ENCODE measurements at regions of chr18 and their contacts with region 1.

Region 1: DNA sequence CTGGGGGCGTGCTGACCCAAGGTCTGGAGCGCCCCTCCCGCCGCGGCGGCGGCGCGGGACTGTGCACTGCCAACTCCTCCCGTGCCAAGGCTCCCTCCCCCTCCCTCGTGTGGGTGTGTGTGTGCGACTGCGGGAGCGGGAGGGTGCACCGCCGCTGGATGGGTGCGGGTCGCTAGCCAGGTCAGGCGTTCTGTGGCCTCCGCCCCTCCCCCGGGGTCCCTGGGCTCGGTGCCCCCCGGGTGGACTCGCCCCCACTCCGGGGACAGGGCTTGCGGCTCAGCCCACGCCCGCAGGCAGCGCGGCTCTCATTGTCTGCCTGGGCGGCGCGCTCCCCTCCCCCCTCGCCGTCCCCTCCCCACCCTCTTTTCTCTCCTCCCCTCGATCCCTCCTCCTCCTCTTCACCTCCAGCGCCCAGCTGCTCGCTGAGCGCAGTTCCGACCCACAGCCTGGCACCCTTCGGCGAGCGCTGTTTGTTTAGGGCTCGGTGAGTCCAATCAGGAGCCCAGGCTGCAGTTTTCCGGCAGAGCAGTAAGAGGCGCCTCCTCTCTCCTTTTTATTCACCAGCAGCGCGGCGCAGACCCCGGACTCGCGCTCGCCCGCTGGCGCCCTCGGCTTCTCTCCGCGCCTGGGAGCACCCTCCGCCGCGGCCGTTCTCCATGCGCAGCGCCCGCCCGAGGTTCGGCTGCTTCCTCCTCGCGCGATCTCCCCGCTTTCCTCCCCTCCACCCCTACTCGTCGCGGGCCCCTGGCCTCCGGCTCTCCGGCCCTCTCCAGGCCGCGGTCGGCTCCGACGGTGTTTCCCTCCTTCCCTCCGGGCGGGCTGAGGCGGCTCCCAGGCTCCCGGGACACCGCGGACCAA is at the start of gene GATA6:
- DNase-seq: peak; percentile 63
- ATAC-seq: peak; percentile 71
- H3K4me3 Mint-ChIP-seq: peak within 1 kb of the TSS; percentile 61
- H3K27ac Mint-ChIP-seq: no peak within 1 kb of the TSS
- H3K4me1 Mint-ChIP-seq: peaks cover 21% of the 10 kb centered on the region
- H3K27me3 Mint-ChIP-seq: peaks cover 65% of the 10 kb centered on the region
- total RNA-seq, gene GATA6: not detected

Region 2: GRCh38 chr18:21242141-21242779 is 927.0 kb before region 1 on chr18 and contains the start of gene GREB1L:
- CTCF ChIA-PET with region 1: no interaction called
- POLR2A ChIA-PET with region 1: no interaction called
- intact Hi-C with region 1: loop called in 1 of 2 experiments (anchors 5 kb)
- DNase-seq: peak; percentile 62
- ATAC-seq: peak; percentile 86
- H3K4me3 Mint-ChIP-seq: peak within 1 kb of the TSS; percentile 33
- H3K27ac Mint-ChIP-seq: no peak within 1 kb of the TSS
- H3K4me1 Mint-ChIP-seq: peaks cover 5% of the 10 kb centered on the region
- H3K27me3 Mint-ChIP-seq: peaks cover 52% of the 10 kb centered on the region
- total RNA-seq, gene GREB1L: not detected

Region 3: GRCh38 chr18:21997207-21998143 is 171.8 kb before region 1 on chr18:
- CTCF ChIA-PET with region 1: no interaction called
- POLR2A ChIA-PET with region 1: no interaction called
- intact Hi-C with region 1: loop called in 1 of 2 experiments (anchors 10 kb)
- DNase-seq: no peak
- ATAC-seq: peak; percentile 47
- H3K4me3 Mint-ChIP-seq: no peak overlapping the region
- H3K27ac Mint-ChIP-seq: no peak overlapping the region
- H3K4me1 Mint-ChIP-seq: peaks cover 3% of the 10 kb centered on the region
- H3K27me3 Mint-ChIP-seq: no peaks in the 10 kb centered on the region

Region 4: DNA sequence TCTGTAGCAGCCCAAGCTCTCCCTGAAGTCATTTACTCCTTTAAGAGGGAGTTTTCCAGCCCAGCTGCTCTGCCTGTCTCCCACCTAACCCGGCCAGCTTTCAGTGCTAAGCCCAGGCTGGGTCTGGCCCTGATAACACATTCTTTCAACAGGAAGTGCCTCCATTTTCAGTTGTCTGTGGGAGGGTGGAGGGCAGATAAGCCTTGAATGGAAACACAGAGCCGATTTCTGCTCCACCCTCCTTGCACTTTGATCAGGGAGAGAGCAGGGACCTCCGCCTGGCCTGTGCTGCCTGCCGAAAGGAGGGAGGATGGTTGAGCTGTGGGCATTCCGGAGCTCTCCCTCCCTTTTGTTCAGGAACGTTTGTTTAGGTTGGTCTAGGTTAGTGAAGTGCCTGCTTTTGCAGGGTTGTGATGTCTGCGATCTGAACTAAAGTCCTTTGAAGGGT is 24.9 kb after region 1 on chr18:
- CTCF ChIA-PET with region 1: no interaction called
- POLR2A ChIA-PET with region 1: no interaction called
- intact Hi-C with region 1: no loop called
- DNase-seq: no peak
- ATAC-seq: no peak
- H3K4me3 Mint-ChIP-seq: no peak overlapping the region
- H3K27ac Mint-ChIP-seq: no peak overlapping the region
- H3K4me1 Mint-ChIP-seq: no peaks in the 10 kb centered on the region
- H3K27me3 Mint-ChIP-seq: peaks cover 14% of the 10 kb centered on the region

Region 5: GRCh38 chr18:22230471-22230945 is 61.3 kb after region 1 on chr18:
- CTCF ChIA-PET with region 1: no interaction called
- POLR2A ChIA-PET with region 1: no interaction called
- intact Hi-C with region 1: no loop called
- DNase-seq: no peak
- ATAC-seq: no peak
- H3K4me3 Mint-ChIP-seq: no peak overlapping the region
- H3K27ac Mint-ChIP-seq: no peak overlapping the region
- H3K4me1 Mint-ChIP-seq: no peaks in the 10 kb centered on the region
- H3K27me3 Mint-ChIP-seq: peaks cover 4% of the 10 kb centered on the region

Region 6: DNA sequence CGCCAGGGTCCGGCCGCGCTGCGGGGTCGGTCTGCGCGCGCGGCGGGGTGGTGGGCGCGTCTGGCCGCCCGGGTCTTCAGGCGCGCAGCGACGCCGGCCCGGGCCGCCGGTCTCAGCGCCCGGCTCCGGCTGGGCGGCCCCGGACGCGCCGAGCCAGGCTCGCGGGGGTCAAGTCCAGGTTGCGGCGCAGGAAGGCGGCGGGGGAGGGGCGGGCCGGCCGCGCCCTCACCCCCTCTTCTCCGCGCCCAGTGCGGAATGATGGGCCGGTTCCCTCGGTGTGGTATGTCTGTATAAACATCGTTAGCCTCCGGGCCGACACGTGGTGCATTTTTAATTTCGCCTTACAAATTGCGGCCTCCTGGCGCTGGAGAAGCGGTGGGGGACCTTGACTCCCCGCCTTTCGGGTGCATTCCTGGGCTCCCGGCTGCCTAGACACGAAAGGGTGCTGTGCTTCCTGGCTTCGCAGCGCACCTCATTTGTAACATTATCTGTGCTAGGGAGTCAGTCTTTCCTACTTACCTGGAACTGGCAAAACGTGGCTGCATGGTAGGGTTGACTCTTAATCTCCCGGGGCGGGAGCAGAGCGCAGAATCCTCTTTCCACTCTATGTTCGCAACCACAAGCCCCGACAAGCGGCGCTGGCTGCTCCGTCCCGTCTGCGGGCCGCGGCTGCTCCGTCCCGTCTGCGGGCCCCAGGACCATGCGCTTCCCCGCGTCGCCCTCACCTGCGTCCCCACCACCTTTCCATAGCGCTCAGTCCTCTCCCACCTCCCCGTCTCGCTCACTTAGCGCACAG is 179.5 kb after region 1 on chr18:
- CTCF ChIA-PET with region 1: no interaction called
- POLR2A ChIA-PET with region 1: no interaction called
- intact Hi-C with region 1: loop called (anchors 2 to 10 kb)
- DNase-seq: peak; percentile 9
- ATAC-seq: peak; percentile 19
- H3K4me3 Mint-ChIP-seq: peak overlapping the region; percentile 49
- H3K27ac Mint-ChIP-seq: no peak overlapping the region
- H3K4me1 Mint-ChIP-seq: peaks cover 6% of the 10 kb centered on the region
- H3K27me3 Mint-ChIP-seq: peaks cover 38% of the 10 kb centered on the region

Region 7: DNA sequence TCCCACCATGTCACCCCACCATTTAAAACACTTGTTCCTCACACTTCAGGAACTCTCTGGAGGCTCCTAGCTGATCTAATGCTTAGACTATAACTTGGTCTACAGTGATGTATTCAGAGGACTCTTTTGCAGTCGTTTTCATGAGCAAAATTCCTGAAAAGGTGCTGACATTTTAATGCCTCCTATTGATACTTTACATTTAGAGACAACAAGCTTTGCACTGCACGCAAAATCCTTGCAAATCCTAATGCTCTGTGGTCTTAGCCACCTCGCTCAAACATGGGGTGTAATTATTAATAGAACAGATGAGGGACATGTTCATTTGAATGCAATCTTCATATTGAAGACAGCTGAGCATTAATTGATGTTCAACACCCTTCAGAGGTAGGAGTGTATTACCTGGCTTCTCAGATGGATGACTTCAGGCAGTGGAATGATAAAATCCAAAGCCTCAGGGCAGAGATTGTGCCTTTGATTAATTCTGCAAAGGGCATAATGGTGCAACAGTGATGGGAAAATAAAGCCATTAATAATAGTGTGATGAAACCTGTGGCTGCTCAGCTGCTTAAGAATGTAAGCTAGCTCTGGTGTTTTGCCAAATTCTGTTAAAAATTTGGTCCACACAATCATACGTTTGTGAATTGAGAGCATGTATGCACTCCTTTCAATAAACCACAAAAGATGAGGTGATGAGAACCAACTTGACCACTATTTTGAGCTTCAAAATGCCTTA is 243.1 kb after region 1 on chr18:
- CTCF ChIA-PET with region 1: no interaction called
- POLR2A ChIA-PET with region 1: no interaction called
- intact Hi-C with region 1: loop called in 1 of 2 experiments (anchors 10 kb)
- DNase-seq: no peak
- ATAC-seq: no peak
- H3K4me3 Mint-ChIP-seq: no peak overlapping the region
- H3K27ac Mint-ChIP-seq: no peak overlapping the region
- H3K4me1 Mint-ChIP-seq: no peaks in the 10 kb centered on the region
- H3K27me3 Mint-ChIP-seq: no peaks in the 10 kb centered on the region

Region 8: DNA sequence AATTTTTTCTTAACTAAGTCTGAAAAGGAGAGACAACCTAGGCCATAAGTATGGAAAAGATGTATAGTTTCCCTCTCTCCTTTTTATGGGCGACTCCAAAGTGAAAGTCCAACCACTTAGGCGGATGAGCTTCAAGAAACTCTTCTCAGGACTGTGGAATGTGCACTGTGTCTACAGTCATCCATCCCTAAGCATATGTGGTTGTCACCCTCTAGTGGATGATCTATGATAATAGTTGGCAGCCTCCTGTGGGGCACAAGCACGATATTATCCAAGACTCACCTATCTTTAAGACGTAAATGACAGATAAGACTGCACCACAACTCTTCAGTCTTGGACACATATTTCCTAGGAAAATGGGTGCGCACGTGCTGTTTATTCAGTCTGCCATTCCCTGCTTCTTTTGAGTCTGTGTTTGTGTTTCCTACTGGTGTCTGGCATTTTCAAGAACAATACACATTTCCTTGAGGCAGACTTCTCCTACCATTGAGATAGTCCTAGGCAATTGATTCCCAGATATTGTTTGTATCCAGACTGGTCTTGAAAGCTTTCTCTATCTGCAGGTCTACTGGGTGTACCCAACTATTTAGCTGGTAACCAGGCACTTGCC is 394.0 kb after region 1 on chr18:
- CTCF ChIA-PET with region 1: no interaction called
- POLR2A ChIA-PET with region 1: no interaction called
- intact Hi-C with region 1: loop called (anchors 2 to 5 kb)
- DNase-seq: peak; percentile 9
- ATAC-seq: peak; percentile 55
- H3K4me3 Mint-ChIP-seq: no peak overlapping the region
- H3K27ac Mint-ChIP-seq: no peak overlapping the region
- H3K4me1 Mint-ChIP-seq: peaks cover 5% of the 10 kb centered on the region
- H3K27me3 Mint-ChIP-seq: peaks cover 29% of the 10 kb centered on the region

Region 9: GRCh38 chr18:22703883-22704585 is 534.8 kb after region 1 on chr18:
- CTCF ChIA-PET with region 1: no interaction called
- POLR2A ChIA-PET with region 1: no interaction called
- intact Hi-C with region 1: loop called in 1 of 2 experiments (anchors 1 kb)
- DNase-seq: peak; percentile 6
- ATAC-seq: no peak
- H3K4me3 Mint-ChIP-seq: no peak overlapping the region
- H3K27ac Mint-ChIP-seq: no peak overlapping the region
- H3K4me1 Mint-ChIP-seq: no peaks in the 10 kb centered on the region
- H3K27me3 Mint-ChIP-seq: peaks cover 8% of the 10 kb centered on the region

Measured in activated CD4-positive, alpha-beta T cell treated with anti-CD3 and anti-CD28 coated beads for 36 hours (primary cell).